ENCODE measurements at regions of chr7 and their contacts with region 1.

Region 1: DNA sequence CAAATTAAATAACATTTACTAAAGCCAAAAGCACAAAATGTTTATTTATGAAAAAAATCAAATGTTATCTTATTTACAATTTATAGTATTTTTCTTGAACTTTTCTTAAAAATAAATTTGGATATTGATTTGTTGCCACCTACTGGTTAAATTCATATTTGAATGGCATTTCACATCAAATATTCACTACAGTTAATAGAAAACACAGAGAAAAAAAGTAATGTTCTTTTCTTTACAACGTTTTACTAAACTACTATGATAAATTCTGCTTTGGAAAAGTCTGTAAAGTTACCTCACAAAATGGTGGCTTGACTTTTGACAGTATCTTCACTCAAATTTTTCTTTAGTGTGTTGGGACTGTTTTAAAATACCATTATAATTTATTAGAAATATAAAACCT is 52.7 kb downstream of the SRPK2 start:
- DNase-seq: no peak
- ATAC-seq: no peak
- H3K4me3 ChIP-seq: no peak overlapping the region
- H3K4me3 Mint-ChIP-seq: no peak overlapping the region
- H3K27ac ChIP-seq: no peak overlapping the region
- H3K27ac Mint-ChIP-seq: no peak overlapping the region
- H3K4me1 ChIP-seq: peaks cover 0 to 4% of the 10 kb centered on the region in 2 donors
- H3K4me1 Mint-ChIP-seq: peaks cover 40% of the 10 kb centered on the region
- H3K27me3 ChIP-seq: no peaks in the 10 kb centered on the region
- H3K27me3 Mint-ChIP-seq: no peaks in the 10 kb centered on the region
- CTCF ChIP-seq: peak; percentile 68

Region 2: GRCh38 chr7:104931181-104931781 is 404.7 kb before region 1 on chr7:
- CTCF ChIA-PET with region 1: no interaction called
- POLR2A ChIA-PET with region 1: interaction called, 12 read pairs
- intact Hi-C with region 1: no loop called
- DNase-seq: no peak
- ATAC-seq: no peak
- H3K4me3 ChIP-seq: no peak overlapping the region
- H3K4me3 Mint-ChIP-seq: peak overlapping the region; percentile 48
- H3K27ac ChIP-seq: peak overlapping the region; percentile 73 to 75
- H3K27ac Mint-ChIP-seq: peak overlapping the region; percentile 81
- H3K4me1 ChIP-seq: peaks cover 39 to 48% of the 10 kb centered on the region in 2 donors
- H3K4me1 Mint-ChIP-seq: peaks cover 56% of the 10 kb centered on the region
- H3K27me3 ChIP-seq: no peaks in the 10 kb centered on the region
- H3K27me3 Mint-ChIP-seq: no peaks in the 10 kb centered on the region
- CTCF ChIP-seq: no peak

Region 3: DNA sequence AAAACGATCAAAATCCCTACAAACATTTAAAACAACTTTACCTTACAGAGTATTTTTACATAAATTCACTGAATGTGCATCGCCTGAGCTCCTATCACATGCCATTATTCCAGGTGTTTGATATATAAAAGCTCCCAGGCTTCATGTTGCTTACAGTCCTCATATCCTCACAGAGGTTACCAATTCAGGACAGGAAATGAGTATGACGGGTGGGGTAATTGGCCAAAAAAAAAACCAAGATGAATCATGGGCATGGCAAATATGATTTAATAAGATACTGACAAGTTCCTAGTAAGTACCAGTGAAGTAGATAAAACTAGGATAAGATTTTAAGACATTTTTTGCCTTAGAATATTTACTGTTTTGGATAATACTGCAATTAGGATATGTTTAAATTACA is 186.2 kb before region 1 on chr7:
- CTCF ChIA-PET with region 1: no interaction called
- POLR2A ChIA-PET with region 1: no interaction called
- intact Hi-C with region 1: loop called (anchors 5 kb)
- DNase-seq: no peak
- ATAC-seq: no peak
- H3K4me3 ChIP-seq: no peak overlapping the region
- H3K4me3 Mint-ChIP-seq: no peak overlapping the region
- H3K27ac ChIP-seq: no peak overlapping the region
- H3K27ac Mint-ChIP-seq: no peak overlapping the region
- H3K4me1 ChIP-seq: no peaks in the 10 kb centered on the region
- H3K4me1 Mint-ChIP-seq: no peaks in the 10 kb centered on the region
- H3K27me3 ChIP-seq: no peaks in the 10 kb centered on the region
- H3K27me3 Mint-ChIP-seq: no peaks in the 10 kb centered on the region
- CTCF ChIP-seq: no peak

Region 4: GRCh38 chr7:105304040-105304895 is 31.7 kb before region 1 on chr7:
- CTCF ChIA-PET with region 1: no interaction called
- POLR2A ChIA-PET with region 1: no interaction called
- intact Hi-C with region 1: no loop called
- DNase-seq: no peak
- ATAC-seq: no peak
- H3K4me3 ChIP-seq: no peak overlapping the region
- H3K4me3 Mint-ChIP-seq: no peak overlapping the region
- H3K27ac ChIP-seq: no peak overlapping the region
- H3K27ac Mint-ChIP-seq: peak overlapping the region; percentile 41
- H3K4me1 ChIP-seq: peaks cover 8 to 11% of the 10 kb centered on the region in 2 donors
- H3K4me1 Mint-ChIP-seq: peaks cover 50% of the 10 kb centered on the region
- H3K27me3 ChIP-seq: no peaks in the 10 kb centered on the region
- H3K27me3 Mint-ChIP-seq: no peaks in the 10 kb centered on the region
- CTCF ChIP-seq: no peak

Region 5: DNA sequence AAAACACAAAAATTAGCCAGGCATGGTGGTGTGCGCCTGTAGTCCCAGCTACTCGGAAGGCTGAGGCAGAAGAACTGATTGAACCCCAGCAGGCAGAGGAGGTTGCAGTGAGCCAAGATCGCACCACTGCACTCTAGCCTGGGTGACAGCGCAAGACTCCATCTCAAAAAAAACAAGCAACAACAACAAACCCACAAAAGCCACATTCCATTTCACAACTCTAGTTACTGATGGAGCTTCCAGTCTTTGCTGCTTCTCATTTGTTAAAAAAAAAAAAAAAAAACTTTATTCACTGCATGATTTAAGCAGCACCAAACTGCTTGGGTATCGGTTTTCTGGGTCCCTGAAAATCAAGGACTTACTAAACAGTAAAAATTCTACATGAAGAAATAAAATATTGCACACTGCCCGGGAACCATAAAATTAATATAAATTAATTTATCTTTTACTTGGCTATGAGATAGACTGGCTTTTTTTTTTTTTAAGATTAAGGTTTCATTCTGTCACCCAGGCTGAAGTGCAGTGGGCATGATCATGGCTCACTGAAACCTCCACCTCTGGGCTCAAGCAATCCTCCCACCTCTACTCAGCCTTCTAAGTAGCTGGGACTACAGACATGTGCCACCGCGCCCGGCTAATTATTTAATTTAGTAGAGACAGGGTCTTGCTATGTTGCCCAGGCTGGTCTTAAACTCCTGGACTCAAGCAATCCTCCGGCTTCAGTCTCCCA is 10.7 kb after region 1 on chr7:
- CTCF ChIA-PET with region 1: interaction called, 3 read pairs
- POLR2A ChIA-PET with region 1: no interaction called
- intact Hi-C with region 1: loop called (anchors 1 kb)
- DNase-seq: no peak
- ATAC-seq: no peak
- H3K4me3 ChIP-seq: no peak overlapping the region
- H3K4me3 Mint-ChIP-seq: peak overlapping the region; percentile 73
- H3K27ac ChIP-seq: peak overlapping the region; percentile 12 to 78
- H3K27ac Mint-ChIP-seq: peak overlapping the region; percentile 78
- H3K4me1 ChIP-seq: peaks cover 72 to 83% of the 10 kb centered on the region in 2 donors
- H3K4me1 Mint-ChIP-seq: peaks cover 57% of the 10 kb centered on the region
- H3K27me3 ChIP-seq: no peaks in the 10 kb centered on the region
- H3K27me3 Mint-ChIP-seq: no peaks in the 10 kb centered on the region
- CTCF ChIP-seq: no peak